ENCODE measurements at regions of chr9 and their contacts with region 1.

Region 1: GRCh38 chr9:104177003-104177611 is 83.0 kb downstream of the SMC2 start:
- DNase-seq: no peak
- H3K4me3 ChIP-seq: no peak overlapping the region
- H3K27ac ChIP-seq: no peak overlapping the region
- H3K4me1 ChIP-seq: no peaks in the 10 kb centered on the region
- H3K27me3 ChIP-seq: no peaks in the 10 kb centered on the region
- CTCF ChIP-seq: peak; percentile 63

Region 2: GRCh38 chr9:104068546-104068945 is 108.6 kb before region 1 on chr9:
- CTCF ChIA-PET with region 1: no interaction called
- POLR2A ChIA-PET with region 1: no interaction called
- intact Hi-C with region 1: no loop called
- DNase-seq: peak in 1 of 2 experiments; percentile 47
- H3K4me3 ChIP-seq: no peak overlapping the region
- H3K27ac ChIP-seq: no peak overlapping the region
- H3K4me1 ChIP-seq: no peaks in the 10 kb centered on the region
- H3K27me3 ChIP-seq: no peaks in the 10 kb centered on the region
- CTCF ChIP-seq: no peak

Region 3: GRCh38 chr9:104386425-104387069 is 209.4 kb after region 1 on chr9:
- CTCF ChIA-PET with region 1: no interaction called
- POLR2A ChIA-PET with region 1: no interaction called
- intact Hi-C with region 1: loop called (anchors 1 kb)
- DNase-seq: no peak
- H3K4me3 ChIP-seq: no peak overlapping the region
- H3K27ac ChIP-seq: no peak overlapping the region
- H3K4me1 ChIP-seq: no peaks in the 10 kb centered on the region
- H3K27me3 ChIP-seq: no peaks in the 10 kb centered on the region
- CTCF ChIP-seq: peak; percentile 74

Region 4: DNA sequence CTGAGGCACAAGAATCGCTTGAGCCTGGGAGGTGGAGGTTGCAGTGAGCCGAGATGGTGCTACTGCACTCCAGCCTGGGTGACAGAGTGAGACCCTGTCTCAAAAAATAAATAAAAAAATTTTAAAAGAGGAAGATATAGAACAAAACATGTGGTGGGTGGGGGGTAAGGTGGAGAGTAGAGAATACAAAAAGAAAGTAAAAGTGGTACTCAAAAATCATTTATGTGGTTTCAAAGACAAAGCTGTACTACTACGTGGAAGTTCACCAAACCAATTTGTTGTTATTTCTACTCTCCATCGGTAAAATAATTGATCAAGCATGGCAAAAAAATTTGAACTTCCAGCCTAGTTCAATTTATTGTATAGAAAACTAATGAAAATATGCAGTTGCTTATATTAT is 367.5 kb after region 1 on chr9:
- CTCF ChIA-PET with region 1: no interaction called
- POLR2A ChIA-PET with region 1: no interaction called
- intact Hi-C with region 1: no loop called
- DNase-seq: no peak
- H3K4me3 ChIP-seq: no peak overlapping the region
- H3K27ac ChIP-seq: no peak overlapping the region
- H3K4me1 ChIP-seq: no peaks in the 10 kb centered on the region
- H3K27me3 ChIP-seq: no peaks in the 10 kb centered on the region
- CTCF ChIP-seq: no peak

Region 5: DNA sequence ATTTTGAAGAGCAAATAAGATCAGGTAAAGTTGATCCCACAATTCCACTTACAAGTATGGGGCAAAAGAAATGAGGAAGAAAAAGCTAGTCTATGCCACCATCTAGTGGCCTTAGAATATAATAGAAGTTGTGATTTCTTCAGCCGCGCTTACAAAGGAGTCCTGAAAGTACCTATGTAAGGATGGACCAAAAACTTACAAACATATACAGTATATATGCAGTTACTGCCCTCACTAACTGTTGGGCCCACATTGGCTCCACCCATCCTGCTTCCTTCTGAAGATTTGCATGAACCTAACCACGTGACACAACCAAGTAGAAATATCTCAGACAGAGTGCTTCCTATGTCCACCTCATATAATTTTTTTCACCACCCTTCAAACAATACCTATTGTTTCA is 505.5 kb after region 1 on chr9:
- CTCF ChIA-PET with region 1: no interaction called
- POLR2A ChIA-PET with region 1: no interaction called
- intact Hi-C with region 1: loop called (anchors 5 kb)
- DNase-seq: peak in 1 of 2 experiments; percentile 38
- H3K4me3 ChIP-seq: no peak overlapping the region
- H3K27ac ChIP-seq: no peak overlapping the region
- H3K4me1 ChIP-seq: no peaks in the 10 kb centered on the region
- H3K27me3 ChIP-seq: no peaks in the 10 kb centered on the region
- CTCF ChIP-seq: peak; percentile 73